Activated CD8-positive, alpha-beta T cell treated with anti-CD3 and anti-CD28 coated beads, Interleukin-2, amount 10 ng/mL, durations not matched to agents 7 days and 5 days (primary cell): ENCODE measurements at regions of chr9 and their contacts with region 1.

Region 1: GRCh38 chr9:70111042-70111602 is 67.5 kb downstream of the MAMDC2 start:
- DNase-seq: peak; percentile 66
- ATAC-seq: peak; percentile 75
- H3K4me3 Mint-ChIP-seq: no peak overlapping the region
- H3K27ac Mint-ChIP-seq: no peak overlapping the region
- H3K4me1 Mint-ChIP-seq: no peaks in the 10 kb centered on the region
- H3K27me3 Mint-ChIP-seq: peaks cover 13% of the 10 kb centered on the region

Region 2: DNA sequence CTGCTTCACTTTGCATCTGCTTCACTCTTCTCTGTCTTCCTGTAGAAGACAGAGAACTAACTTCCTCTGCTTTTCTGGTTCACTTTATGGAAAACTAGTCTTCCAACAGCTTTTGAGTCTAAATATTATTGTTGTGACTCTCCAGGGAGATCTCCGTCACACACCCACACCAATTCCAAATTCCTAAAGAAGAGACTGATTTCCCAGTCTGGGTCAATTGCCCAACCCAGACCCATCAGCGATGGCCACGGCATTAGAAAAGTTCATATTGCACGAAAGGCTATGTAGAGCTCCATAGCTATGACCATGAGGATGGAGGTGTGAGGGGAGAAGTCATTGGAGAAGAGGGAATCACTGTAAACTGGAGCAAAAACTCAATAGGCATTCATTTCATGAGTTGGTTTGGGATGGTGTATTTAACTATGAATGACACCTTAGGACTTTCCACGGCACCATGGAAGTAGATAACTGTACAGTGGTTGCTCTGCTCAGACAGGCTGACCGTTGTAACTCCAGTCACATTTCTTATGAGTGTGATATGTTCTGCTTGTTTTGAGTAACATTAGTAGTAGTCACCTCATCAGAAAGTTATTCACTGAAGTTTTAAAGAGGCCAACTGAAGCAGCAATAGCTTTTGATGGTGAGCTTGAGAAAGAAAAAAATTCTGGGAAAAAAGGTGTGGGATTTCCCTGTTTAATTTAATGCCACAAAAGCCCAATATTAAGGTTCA is 145.5 kb before region 1 on chr9:
- CTCF ChIA-PET with region 1: interaction called, 61 read pairs
- POLR2A ChIA-PET with region 1: no interaction called
- DNase-seq: no peak
- ATAC-seq: no peak
- H3K4me3 Mint-ChIP-seq: no peak overlapping the region
- H3K27ac Mint-ChIP-seq: no peak overlapping the region
- H3K4me1 Mint-ChIP-seq: no peaks in the 10 kb centered on the region
- H3K27me3 Mint-ChIP-seq: peaks cover 3% of the 10 kb centered on the region

Region 3: DNA sequence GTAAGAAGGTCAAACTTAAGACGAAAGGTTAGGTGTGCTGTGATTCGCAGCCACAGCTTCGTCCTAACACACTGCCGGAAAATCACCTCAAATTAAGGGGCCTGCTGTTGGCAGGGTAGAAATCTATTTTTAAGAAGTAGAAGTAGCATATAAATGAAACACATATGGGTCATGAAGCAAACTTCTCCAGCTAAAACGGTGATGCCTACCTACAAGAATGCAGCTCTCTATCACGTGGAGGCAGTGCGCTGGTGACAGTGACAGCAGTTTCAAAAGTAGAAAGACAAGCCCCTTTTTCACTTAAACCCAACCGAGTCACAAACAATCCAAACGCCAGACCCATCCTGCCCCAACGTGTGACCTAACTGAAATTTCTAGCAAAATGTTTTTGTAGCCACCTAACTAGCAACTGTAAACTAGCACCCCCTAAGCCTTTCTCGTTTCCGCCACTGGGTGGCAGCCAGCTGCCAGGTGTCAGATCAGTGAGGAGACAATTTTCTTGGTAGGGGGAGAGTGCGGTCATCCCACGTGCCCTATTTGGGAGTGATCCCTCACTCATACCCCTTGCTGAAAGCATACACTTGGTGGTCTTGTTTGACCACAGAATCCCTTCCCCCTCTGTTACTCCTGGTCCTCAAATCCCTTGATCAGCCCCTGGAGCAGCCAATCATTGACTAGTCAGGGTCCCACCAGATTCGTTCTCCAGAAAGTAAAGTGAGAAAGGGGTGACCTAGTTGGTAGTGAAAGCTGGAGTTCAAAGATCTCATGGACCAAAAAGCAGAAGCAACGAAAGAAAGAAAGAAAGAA is 139.3 kb before region 1 on chr9:
- CTCF ChIA-PET with region 1: interaction called, 61 read pairs
- POLR2A ChIA-PET with region 1: no interaction called
- DNase-seq: peak; percentile 66
- ATAC-seq: peak; percentile 51
- H3K4me3 Mint-ChIP-seq: no peak overlapping the region
- H3K27ac Mint-ChIP-seq: no peak overlapping the region
- H3K4me1 Mint-ChIP-seq: no peaks in the 10 kb centered on the region
- H3K27me3 Mint-ChIP-seq: peaks cover 2% of the 10 kb centered on the region

Region 4: DNA sequence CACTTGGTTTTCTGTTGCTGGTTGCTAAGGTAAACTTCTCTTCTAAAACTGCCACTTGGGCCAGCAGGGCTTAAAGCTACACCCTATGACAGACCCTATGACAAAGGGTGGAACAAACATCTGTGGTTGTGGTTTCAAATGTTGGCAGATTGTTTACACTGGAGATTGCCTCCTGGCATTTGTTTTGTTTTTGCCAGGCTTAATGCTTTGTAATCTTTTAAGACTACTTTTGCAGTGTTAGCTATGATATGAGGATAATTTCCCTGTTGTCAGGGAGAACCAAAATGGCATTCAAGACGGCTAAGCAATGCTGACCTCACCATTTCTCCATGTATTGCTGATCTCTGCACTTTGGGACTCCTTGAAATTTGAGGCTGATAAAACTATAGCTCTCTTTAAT is 17.2 kb before region 1 on chr9:
- CTCF ChIA-PET with region 1: interaction called, 38 read pairs
- POLR2A ChIA-PET with region 1: no interaction called
- DNase-seq: no peak
- ATAC-seq: peak; percentile 42
- H3K4me3 Mint-ChIP-seq: no peak overlapping the region
- H3K27ac Mint-ChIP-seq: no peak overlapping the region
- H3K4me1 Mint-ChIP-seq: no peaks in the 10 kb centered on the region
- H3K27me3 Mint-ChIP-seq: peaks cover 4% of the 10 kb centered on the region

Region 5: DNA sequence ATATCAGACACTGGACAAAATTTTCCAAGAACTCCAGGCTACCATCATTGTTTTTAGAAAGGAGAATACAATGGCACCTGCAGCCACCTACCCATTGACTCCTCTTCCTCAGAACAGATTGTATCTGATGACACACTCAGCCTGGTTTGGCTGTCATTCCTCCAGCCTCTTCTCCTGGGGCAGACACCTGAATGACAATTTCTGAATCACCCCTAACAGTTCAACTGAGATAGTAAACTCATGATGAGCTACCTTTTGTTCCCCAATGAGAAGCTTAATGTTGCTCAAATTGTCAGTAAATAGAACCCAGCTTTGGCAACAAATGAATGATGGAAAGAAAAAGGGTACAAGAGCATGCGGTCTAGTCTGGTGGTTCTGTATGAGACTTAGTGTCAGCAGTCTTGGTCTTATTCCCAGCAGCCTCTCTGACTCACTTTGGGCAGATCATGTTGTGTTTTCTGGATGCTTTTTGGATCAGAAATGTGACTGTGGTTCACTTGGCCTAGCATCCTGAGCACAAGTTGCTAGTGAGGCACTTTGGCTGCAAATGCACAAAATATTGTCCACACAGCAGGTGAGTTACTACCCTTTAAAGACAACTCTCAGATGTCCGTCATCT is 10.8 kb after region 1 on chr9:
- CTCF ChIA-PET with region 1: interaction called, 18 read pairs
- POLR2A ChIA-PET with region 1: no interaction called
- DNase-seq: no peak
- ATAC-seq: no peak
- H3K4me3 Mint-ChIP-seq: no peak overlapping the region
- H3K27ac Mint-ChIP-seq: no peak overlapping the region
- H3K4me1 Mint-ChIP-seq: no peaks in the 10 kb centered on the region
- H3K27me3 Mint-ChIP-seq: peaks cover 4% of the 10 kb centered on the region